ENCODE measurements at regions of chr7 and their contacts with region 1.

Region 1: DNA sequence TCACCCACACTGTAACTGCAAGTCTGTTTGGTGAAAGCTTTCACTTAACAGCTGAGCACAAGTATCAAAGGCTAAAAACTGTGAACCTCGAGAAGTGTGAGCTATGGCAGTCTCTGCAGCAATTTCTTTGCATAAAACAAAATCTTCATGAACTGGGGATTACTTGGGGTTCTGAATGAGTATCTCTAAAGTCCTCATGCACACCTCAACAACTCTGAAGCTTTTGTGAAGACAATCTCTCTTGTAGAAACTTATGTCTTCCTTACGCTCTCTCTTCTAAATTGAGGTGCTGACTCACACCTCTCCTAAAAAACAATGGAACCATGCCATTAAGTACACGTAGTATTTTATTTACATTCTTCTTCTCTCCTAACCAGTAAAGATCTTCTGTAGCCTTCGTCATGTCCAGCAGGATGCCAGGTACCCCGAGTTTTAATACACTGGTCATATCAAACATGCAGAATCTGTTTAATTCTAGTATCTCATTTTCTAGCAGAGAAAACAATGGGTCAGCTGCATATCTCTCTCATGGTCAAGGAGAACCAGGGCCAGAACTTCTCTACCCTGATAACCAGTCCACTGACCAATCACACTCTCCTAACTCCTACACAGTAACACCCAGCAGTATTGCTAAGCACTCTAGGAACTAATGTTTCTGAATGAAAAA is 76.9 kb downstream of the UBE2H start:
- DNase-seq: peak; percentile 69
- H3K4me3 Mint-ChIP-seq: peak overlapping the region; percentile 69
- H3K27ac Mint-ChIP-seq: peak overlapping the region; percentile 90
- H3K4me1 Mint-ChIP-seq: peaks cover 35% of the 10 kb centered on the region
- H3K27me3 Mint-ChIP-seq: no peaks in the 10 kb centered on the region
- CTCF ChIP-seq: no peak

Region 2: GRCh38 chr7:129784783-129785684 is 90.8 kb before region 1 on chr7:
- CTCF ChIA-PET with region 1: no interaction called
- POLR2A ChIA-PET with region 1: no interaction called
- intact Hi-C with region 1: no loop called
- DNase-seq: no peak
- H3K4me3 Mint-ChIP-seq: no peak overlapping the region
- H3K27ac Mint-ChIP-seq: no peak overlapping the region
- H3K4me1 Mint-ChIP-seq: no peaks in the 10 kb centered on the region
- H3K27me3 Mint-ChIP-seq: no peaks in the 10 kb centered on the region
- CTCF ChIP-seq: no peak

Region 3: DNA sequence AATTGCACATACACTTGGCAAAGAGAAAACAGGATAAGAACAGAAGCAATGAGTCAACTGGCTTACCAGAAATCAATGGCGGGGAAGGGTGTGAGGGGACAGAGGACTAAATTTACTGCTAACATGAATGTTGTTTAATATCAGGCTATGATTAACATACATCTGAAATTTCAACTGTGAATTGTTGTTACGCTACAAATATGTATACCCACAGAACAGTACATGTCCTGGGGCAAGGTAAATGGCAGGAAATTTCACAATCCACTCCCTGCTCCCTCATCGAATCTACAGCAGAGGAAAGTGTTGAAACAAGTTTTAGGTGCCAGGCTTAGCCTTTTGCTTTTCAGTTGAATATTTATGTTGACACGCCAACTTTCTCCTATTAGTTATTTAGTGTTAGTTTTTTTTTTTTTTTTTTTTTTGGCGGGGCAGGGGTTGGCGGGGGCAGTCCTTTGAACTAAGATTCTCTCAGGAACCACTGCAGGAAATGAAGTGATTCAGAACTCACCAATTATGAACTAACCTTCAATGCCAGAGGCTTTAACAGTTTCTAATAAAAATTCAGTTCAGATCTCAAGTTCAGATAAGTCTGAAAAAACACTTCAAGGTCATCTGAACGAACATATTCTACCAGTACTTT is 22.1 kb before region 1 on chr7:
- CTCF ChIA-PET with region 1: interaction called, 9 read pairs
- POLR2A ChIA-PET with region 1: interaction called, 46 read pairs
- intact Hi-C with region 1: no loop called
- DNase-seq: peak; percentile 97
- H3K4me3 Mint-ChIP-seq: peak overlapping the region; percentile 54
- H3K27ac Mint-ChIP-seq: peak overlapping the region; percentile 92
- H3K4me1 Mint-ChIP-seq: peaks cover 52% of the 10 kb centered on the region
- H3K27me3 Mint-ChIP-seq: no peaks in the 10 kb centered on the region
- CTCF ChIP-seq: no peak

Region 4: GRCh38 chr7:129864042-129864441 is 11.8 kb before region 1 on chr7:
- CTCF ChIA-PET with region 1: interaction called, 3 read pairs
- POLR2A ChIA-PET with region 1: interaction called, 27 read pairs
- intact Hi-C with region 1: no loop called
- DNase-seq: peak; percentile 76
- H3K4me3 Mint-ChIP-seq: no peak overlapping the region
- H3K27ac Mint-ChIP-seq: peak overlapping the region; percentile 82
- H3K4me1 Mint-ChIP-seq: peaks cover 21% of the 10 kb centered on the region
- H3K27me3 Mint-ChIP-seq: no peaks in the 10 kb centered on the region
- CTCF ChIP-seq: no peak

Region 5: DNA sequence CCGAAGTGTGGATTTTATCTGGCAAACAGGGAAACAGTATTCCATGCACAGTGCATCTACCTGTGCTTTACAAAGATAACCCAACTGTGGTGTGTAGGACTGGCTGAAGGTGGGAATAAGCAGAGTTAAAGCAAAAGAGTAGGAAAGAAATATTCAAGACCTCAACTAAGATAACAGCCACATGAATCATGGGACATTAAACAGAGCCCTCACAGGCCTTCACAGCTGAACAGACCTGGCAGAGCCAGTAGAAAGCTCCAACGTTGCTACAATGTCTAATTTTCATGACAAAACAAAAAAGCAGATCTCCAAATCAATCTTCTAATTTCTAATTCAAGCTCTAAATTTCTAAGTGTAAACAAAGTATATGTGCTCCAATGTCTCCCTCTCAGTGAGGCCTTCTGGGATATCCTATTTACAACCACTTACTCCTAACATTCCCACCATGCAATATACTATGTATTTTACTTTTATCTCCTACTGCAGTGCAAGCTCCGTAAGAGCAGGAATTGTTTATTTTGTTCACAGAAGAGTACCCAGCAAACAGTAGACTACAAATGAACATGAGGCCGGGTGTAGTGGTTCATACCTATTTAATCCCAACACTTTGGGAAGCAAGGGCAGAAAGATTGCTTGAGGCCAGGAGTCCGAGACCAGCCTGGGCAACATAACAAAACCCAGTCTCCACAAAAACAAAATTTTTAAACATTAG is 13.4 kb after region 1 on chr7:
- CTCF ChIA-PET with region 1: interaction called, 5 read pairs
- POLR2A ChIA-PET with region 1: interaction called, 44 read pairs
- intact Hi-C with region 1: no loop called
- DNase-seq: no peak
- H3K4me3 Mint-ChIP-seq: no peak overlapping the region
- H3K27ac Mint-ChIP-seq: peak overlapping the region; percentile 12
- H3K4me1 Mint-ChIP-seq: peaks cover 17% of the 10 kb centered on the region
- H3K27me3 Mint-ChIP-seq: no peaks in the 10 kb centered on the region
- CTCF ChIP-seq: no peak